GM12878 (cell line): ENCODE measurements at regions of chr14 and their contacts with region 1.

Region 1: GRCh38 chr14:67934008-67934481 is 114.5 kb downstream of the RAD51B start:
- DNase-seq: peak; percentile 42
- ATAC-seq: peak; percentile 98
- H3K4me3 ChIP-seq: no peak overlapping the region
- H3K27ac ChIP-seq: no peak overlapping the region
- H3K4me1 ChIP-seq: no peaks in the 10 kb centered on the region
- H3K27me3 ChIP-seq: no peaks in the 10 kb centered on the region
- CTCF ChIP-seq: peak; percentile 46 to 65 (median 62)
- EP300 ChIP-seq: no peak
- POLR2A ChIP-seq: no peak
- RAD21 ChIP-seq: peak; percentile 76

Region 2: DNA sequence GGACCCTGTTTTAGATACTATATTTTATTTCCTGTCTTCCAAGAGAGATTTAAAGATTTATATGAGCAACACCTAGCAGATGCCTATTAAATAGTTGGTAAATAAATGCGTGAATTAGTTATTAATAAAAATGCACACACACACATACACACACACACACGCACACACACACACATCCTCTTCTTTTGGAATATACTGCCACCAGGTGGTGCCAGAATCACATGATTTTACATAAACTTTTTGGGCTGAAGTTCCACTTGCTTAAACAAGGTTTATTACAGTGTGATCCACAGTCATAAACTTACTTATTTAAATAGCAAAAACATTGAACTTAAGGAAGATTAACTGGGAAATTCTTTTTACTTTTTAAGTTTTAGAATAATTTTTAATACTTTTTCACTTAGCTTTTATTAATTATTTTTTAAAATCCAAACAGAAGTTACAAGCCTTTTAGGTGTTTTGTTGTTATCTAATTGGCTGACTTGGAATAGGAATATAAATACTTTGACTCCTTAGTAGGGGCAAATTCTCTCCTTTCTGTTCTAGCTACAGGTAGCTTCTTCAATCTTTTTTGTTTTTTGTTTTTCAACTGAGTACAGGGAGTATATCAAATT is 96.9 kb before region 1 on chr14:
- CTCF ChIA-PET with region 1: interaction called, 18 read pairs
- POLR2A ChIA-PET with region 1: no interaction called
- RAD21 ChIA-PET with region 1: interaction called, 5 read pairs
- SMC1A ChIA-PET with region 1: interaction called, 22 read pairs
- in situ Hi-C with region 1: loop called (anchors 5 kb)
- intact Hi-C with region 1: loop called (anchors 5 kb)
- DNase-seq: peak; percentile 34
- ATAC-seq: peak; percentile 76
- H3K4me3 ChIP-seq: no peak overlapping the region
- H3K27ac ChIP-seq: no peak overlapping the region
- H3K4me1 ChIP-seq: no peaks in the 10 kb centered on the region
- H3K27me3 ChIP-seq: no peaks in the 10 kb centered on the region
- CTCF ChIP-seq: peak; percentile 55 to 79 (median 65); a peak in 5 of 6 replicates
- EP300 ChIP-seq: no peak
- POLR2A ChIP-seq: no peak
- RAD21 ChIP-seq: peak; percentile 85

Region 3: GRCh38 chr14:67892466-67893100 is 41.5 kb before region 1 on chr14:
- CTCF ChIA-PET with region 1: interaction called, 10 read pairs
- POLR2A ChIA-PET with region 1: no interaction called
- RAD21 ChIA-PET with region 1: no interaction called
- SMC1A ChIA-PET with region 1: interaction called, 6 read pairs
- in situ Hi-C with region 1: no loop called
- intact Hi-C with region 1: no loop called
- DNase-seq: no peak
- ATAC-seq: no peak
- H3K4me3 ChIP-seq: no peak overlapping the region
- H3K27ac ChIP-seq: no peak overlapping the region
- H3K4me1 ChIP-seq: no peaks in the 10 kb centered on the region
- H3K27me3 ChIP-seq: no peaks in the 10 kb centered on the region
- CTCF ChIP-seq: no peak
- EP300 ChIP-seq: no peak
- POLR2A ChIP-seq: no peak
- RAD21 ChIP-seq: no peak

Region 4: DNA sequence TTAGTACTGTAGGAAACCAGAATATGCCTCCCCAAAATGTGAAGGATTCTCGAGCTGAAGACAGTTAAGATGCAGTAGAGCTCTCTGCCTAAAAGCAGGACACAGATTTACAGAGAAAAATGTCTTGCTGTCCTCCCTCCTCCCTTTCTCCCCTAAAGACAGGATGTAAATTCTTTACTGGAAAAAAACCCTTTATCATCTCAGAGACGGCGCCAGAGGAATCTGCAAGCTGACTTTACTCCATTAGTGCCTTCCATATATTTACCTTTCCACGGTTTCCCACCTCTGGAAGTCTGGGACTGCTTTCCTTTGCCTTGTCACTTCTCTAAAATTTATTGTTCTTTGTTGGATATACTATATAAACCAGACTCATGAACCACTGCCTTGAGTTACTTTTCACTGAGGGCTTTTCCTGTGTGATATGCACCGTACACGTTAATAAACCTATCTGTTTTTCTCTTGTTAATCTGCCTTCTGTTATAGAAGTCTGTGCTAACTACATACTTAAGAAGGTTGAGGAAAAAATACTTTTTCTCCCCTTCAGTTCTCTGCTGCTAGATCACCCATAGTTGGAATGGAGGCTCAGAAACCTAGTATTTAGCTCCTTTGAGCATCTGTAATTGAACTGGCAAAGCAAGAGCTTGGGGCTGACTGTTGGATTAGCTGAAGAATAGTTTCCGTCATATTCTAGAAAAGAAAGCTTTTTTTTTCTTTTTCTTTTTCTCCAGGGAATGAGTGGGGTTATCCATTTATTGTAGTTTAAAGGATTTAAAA is 14.6 kb before region 1 on chr14:
- CTCF ChIA-PET with region 1: interaction called, 13 read pairs
- POLR2A ChIA-PET with region 1: no interaction called
- RAD21 ChIA-PET with region 1: interaction called, 3 read pairs
- SMC1A ChIA-PET with region 1: interaction called, 3 read pairs
- in situ Hi-C with region 1: no loop called
- intact Hi-C with region 1: no loop called
- DNase-seq: no peak
- ATAC-seq: no peak
- H3K4me3 ChIP-seq: no peak overlapping the region
- H3K27ac ChIP-seq: no peak overlapping the region
- H3K4me1 ChIP-seq: no peaks in the 10 kb centered on the region
- H3K27me3 ChIP-seq: no peaks in the 10 kb centered on the region
- CTCF ChIP-seq: no peak
- EP300 ChIP-seq: no peak
- POLR2A ChIP-seq: no peak
- RAD21 ChIP-seq: no peak

Region 5: DNA sequence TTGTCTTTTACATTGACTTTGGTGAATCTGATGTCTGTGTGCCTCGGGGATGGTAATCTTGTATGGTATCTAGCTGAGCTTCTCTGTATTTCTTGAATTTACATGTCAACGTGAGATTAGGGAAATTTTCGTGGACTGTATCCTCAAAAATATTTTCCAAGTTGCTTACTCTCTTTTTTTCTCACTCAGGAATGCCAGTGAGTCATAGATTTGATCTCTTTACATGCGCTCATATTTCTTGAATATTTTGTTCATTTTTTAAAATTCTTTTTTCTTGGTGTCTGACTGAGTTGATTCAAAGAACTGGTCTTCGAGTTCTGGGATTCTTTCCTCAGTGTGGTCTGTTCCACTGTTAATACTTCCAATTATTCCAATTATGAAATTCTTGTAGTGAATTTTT is 93.2 kb after region 1 on chr14:
- CTCF ChIA-PET with region 1: no interaction called
- POLR2A ChIA-PET with region 1: no interaction called
- RAD21 ChIA-PET with region 1: no interaction called
- SMC1A ChIA-PET with region 1: no interaction called
- in situ Hi-C with region 1: no loop called
- intact Hi-C with region 1: no loop called
- DNase-seq: no peak
- ATAC-seq: no peak
- H3K4me3 ChIP-seq: no peak overlapping the region
- H3K27ac ChIP-seq: no peak overlapping the region
- H3K4me1 ChIP-seq: no peaks in the 10 kb centered on the region
- H3K27me3 ChIP-seq: no peaks in the 10 kb centered on the region
- CTCF ChIP-seq: no peak
- EP300 ChIP-seq: no peak
- POLR2A ChIP-seq: no peak
- RAD21 ChIP-seq: no peak

Region 6: GRCh38 chr14:68466491-68467032 is 532.5 kb after region 1 on chr14:
- CTCF ChIA-PET with region 1: no interaction called
- POLR2A ChIA-PET with region 1: no interaction called
- RAD21 ChIA-PET with region 1: no interaction called
- SMC1A ChIA-PET with region 1: no interaction called
- in situ Hi-C with region 1: no loop called
- intact Hi-C with region 1: no loop called
- DNase-seq: no peak
- ATAC-seq: no peak
- H3K4me3 ChIP-seq: no peak overlapping the region
- H3K27ac ChIP-seq: no peak overlapping the region
- H3K4me1 ChIP-seq: peaks cover 16% of the 10 kb centered on the region
- H3K27me3 ChIP-seq: no peaks in the 10 kb centered on the region
- CTCF ChIP-seq: no peak
- EP300 ChIP-seq: no peak
- POLR2A ChIP-seq: no peak
- RAD21 ChIP-seq: no peak

Region 7: GRCh38 chr14:68843471-68844209 is 909.6 kb after region 1 on chr14:
- CTCF ChIA-PET with region 1: interaction called, 17 read pairs
- POLR2A ChIA-PET with region 1: no interaction called
- RAD21 ChIA-PET with region 1: interaction called, 7 read pairs
- SMC1A ChIA-PET with region 1: interaction called, 12 read pairs
- in situ Hi-C with region 1: no loop called
- intact Hi-C with region 1: loop called (anchors 2 kb)
- DNase-seq: no peak
- ATAC-seq: peak; percentile 91
- H3K4me3 ChIP-seq: peak overlapping the region; percentile 25; the same call in 1 of the 2 replicates
- H3K27ac ChIP-seq: no peak overlapping the region
- H3K4me1 ChIP-seq: peaks cover 10% of the 10 kb centered on the region; the same call in 1 of the 2 replicates
- H3K27me3 ChIP-seq: no peaks in the 10 kb centered on the region
- CTCF ChIP-seq: peak; percentile 90 to 91 (median 90)
- EP300 ChIP-seq: no peak
- POLR2A ChIP-seq: no peak
- RAD21 ChIP-seq: peak; percentile 74